CD4-positive, alpha-beta memory T cell (primary cell): ENCODE measurements at regions of chr1 and their contacts with region 1.

Region 1: DNA sequence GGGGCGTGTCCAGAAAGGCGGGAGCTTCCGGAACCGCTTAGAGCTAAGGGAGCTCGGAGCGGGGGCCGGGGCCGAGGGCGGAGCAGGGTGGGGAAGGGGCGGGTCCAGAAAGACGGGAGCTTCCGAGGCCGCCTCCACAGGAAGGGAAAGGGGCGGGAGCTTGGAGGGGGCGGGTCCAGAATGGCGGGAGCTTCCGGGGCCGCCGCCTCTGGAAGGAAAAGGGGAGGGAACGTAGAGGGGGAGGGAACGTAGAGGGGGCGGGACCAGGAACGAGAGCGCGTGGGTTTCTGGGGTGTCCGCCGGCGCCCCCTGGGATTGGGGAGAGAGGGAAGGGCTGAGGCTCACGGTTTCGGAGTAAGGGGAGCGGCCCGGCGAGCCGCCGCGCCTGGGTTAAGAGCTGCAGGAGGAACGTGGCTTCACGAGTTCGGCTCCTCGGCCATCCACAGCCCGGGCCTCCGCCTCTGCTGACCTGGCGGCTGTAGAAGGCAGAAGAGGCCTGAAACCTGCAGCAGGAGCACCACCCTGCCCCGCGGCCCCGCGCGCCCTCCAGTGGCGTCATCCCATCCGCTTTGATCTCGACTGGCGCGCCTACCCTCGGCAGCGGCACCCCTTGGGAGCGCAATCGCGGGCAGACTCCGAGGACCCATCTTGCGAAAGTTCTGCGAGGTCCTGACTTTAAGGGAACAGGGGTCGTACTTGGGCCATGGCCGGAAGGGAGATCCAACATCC is 22.9 kb upstream of the HPDL start:
- DNase-seq: peak; percentile 94 to 97 (median 95)
- H3K4me3 ChIP-seq: peak overlapping the region; percentile 42 to 86
- H3K4me3 Mint-ChIP-seq: peak overlapping the region; percentile 87 to 94 (median 92)
- H3K27ac ChIP-seq: peak overlapping the region; percentile 85
- H3K27ac Mint-ChIP-seq: peak overlapping the region; percentile 93 to 98 (median 96)
- H3K4me1 ChIP-seq: peaks cover 11% of the 10 kb centered on the region
- H3K4me1 Mint-ChIP-seq: peaks cover 11 to 24% (median 18%) of the 10 kb centered on the region in 4 donors
- H3K27me3 ChIP-seq: no peaks in the 10 kb centered on the region
- H3K27me3 Mint-ChIP-seq: no peaks in the 10 kb centered on the region

Region 2: DNA sequence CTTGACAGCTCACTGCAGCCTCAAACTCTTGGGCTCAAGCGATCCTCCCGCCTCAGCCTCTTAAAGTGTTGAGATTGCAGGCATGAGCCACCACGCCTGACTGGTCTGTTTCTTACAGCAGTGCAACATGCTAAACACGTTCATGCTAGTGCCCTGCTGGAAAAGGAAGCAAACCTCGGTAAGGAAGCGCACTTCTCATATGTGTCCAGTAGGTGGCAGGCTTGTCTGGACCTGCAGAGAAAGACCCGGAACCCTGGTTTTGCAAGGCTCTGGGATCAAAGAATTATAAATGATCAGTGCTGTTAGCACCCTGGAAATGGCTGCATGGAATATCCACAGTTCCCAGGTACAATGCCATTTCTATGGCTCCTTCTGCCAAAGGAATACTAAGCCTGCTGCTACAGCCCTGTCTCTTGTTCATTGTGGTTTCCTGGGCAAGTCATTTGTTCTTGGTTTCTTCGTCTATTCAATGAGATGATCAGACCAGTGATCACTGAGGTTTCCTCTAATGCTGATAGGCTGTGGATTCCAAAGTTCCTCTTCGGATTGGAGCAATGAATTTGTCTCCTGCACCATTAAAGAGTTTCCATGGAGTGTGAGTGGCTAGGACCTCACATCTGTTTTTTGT is 588.7 kb before region 1 on chr1:
- CTCF ChIA-PET with region 1: interaction called, 3 read pairs
- POLR2A ChIA-PET with region 1: interaction called, 3 read pairs
- intact Hi-C with region 1: loop called (anchors 5 kb)
- DNase-seq: peak; percentile 70 to 75 (median 74)
- H3K4me3 ChIP-seq: no peak overlapping the region
- H3K4me3 Mint-ChIP-seq: peak overlapping the region in 7 of 8 donors; percentile 1 to 84 (median 62)
- H3K27ac ChIP-seq: no peak overlapping the region
- H3K27ac Mint-ChIP-seq: peak overlapping the region; percentile 8 to 88 (median 77)
- H3K4me1 ChIP-seq: peaks cover 26% of the 10 kb centered on the region
- H3K4me1 Mint-ChIP-seq: peaks cover 28 to 47% (median 39%) of the 10 kb centered on the region in 4 donors
- H3K27me3 ChIP-seq: no peaks in the 10 kb centered on the region
- H3K27me3 Mint-ChIP-seq: no peaks in the 10 kb centered on the region

Region 3: GRCh38 chr1:44792783-44793714 is 510.7 kb before region 1 on chr1:
- CTCF ChIA-PET with region 1: interaction called, 13 read pairs
- POLR2A ChIA-PET with region 1: interaction called, 6 read pairs
- intact Hi-C with region 1: loop called (anchors 2 kb)
- DNase-seq: no peak
- H3K4me3 ChIP-seq: no peak overlapping the region
- H3K4me3 Mint-ChIP-seq: no peak overlapping the region
- H3K27ac ChIP-seq: no peak overlapping the region
- H3K27ac Mint-ChIP-seq: peak overlapping the region in 3 of 7 donors; percentile 44 to 91 (median 79)
- H3K4me1 ChIP-seq: no peaks in the 10 kb centered on the region
- H3K4me1 Mint-ChIP-seq: peaks cover 0 to 5% (median 2%) of the 10 kb centered on the region in 4 donors
- H3K27me3 ChIP-seq: no peaks in the 10 kb centered on the region
- H3K27me3 Mint-ChIP-seq: no peaks in the 10 kb centered on the region

Region 4: DNA sequence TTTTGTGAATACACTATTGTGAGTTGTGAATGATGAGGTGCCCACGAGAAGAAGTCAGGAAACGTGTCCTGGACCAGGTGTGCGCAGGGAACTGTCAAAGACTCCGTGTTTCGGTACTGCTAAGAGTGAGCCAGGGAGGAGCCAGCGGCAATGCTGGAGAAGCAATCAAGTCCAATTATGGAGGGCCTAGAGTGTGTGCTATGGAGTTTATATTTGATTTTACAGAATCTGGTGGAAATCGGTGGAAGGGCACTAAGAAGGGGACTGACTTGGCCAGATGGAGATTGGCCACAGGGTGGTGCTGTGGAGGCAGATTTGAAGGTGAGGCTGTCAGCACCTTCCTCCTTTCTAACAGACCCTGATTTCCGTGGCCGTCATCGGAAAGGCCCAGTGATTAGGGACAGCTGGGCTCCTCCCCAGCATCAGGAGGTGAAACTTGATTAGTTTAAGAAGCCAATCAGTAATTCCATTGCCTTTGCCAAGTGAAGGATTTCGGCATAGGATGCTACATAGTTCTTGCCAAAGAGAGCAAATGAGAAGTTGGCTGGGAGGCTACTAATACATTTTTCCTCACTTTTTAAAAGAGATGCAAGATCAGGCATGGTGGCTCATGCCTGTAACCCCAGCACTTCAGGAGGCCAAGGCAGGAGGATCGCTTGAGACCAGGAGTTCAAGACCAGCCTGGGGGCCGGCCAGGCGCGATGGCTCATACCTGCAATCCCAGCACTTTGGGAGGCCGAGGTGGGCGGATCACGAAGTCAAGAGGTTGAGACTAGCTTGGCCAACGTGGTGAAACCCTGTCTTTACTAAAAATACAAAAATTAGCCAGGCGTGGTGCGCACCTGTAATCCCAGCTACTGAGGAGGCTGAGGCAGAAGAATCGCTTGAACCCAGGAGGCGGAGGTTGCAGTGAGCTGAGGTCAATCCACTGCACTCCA is 467.7 kb before region 1 on chr1:
- CTCF ChIA-PET with region 1: interaction called, 5 read pairs
- POLR2A ChIA-PET with region 1: no interaction called
- intact Hi-C with region 1: loop called (anchors 1 kb)
- DNase-seq: peak; percentile 71 to 83 (median 75)
- H3K4me3 ChIP-seq: no peak overlapping the region
- H3K4me3 Mint-ChIP-seq: peak overlapping the region in 4 of 8 donors; percentile 19 to 69 (median 42)
- H3K27ac ChIP-seq: no peak overlapping the region
- H3K27ac Mint-ChIP-seq: peak overlapping the region in 6 of 7 donors; percentile 7 to 74 (median 58)
- H3K4me1 ChIP-seq: peaks cover 4% of the 10 kb centered on the region
- H3K4me1 Mint-ChIP-seq: peaks cover 5 to 9% (median 8%) of the 10 kb centered on the region in 4 donors
- H3K27me3 ChIP-seq: no peaks in the 10 kb centered on the region
- H3K27me3 Mint-ChIP-seq: peaks cover 5 to 10% of the 10 kb centered on the region in 2 donors

Region 5: DNA sequence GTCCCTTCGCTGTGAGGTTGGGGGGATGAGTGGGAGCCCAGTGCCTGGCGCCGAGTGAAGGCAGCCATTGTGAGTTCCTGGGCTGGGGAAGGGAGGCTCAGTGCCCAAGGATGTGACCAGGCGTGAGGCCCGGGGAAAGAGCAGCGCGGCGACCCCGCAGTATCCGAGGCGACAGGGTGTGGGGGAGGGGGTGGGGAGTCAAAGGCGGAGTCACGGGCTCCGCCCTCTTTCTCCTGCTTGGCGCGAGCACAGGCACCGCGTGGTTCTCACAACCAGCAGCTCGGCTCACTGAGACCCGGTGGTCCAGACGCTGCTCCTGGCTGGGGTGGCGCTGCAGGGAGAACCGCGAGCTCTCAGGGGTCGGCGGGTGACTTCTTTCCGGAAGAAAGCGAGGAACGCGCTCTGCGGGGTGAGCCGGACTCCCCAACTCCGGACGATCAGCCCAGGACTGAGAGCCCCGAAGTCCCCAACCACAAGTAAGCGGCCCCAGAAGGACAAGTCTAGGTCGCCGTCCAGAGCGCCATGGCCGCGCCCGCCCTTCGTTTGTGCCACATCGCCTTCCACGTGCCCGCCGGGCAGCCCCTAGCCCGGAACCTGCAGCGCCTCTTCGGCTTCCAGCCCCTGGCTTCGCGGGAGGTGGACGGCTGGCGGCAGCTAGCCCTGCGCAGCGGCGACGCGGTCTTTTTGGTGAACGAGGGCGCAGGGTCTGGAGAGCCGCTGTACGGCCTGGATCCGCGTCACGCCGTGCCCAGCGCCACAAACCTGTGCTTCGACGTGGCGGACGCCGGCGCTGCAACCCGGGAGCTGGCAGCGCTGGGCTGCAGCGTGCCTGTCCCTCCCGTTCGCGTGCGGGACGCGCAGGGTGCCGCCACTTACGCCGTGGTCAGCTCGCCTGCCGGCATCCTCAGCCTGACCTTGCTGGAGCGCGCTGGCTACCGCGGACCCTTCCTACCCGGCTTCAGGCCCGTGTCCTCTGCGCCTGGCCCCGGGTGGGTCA is 23.2 kb after region 1 on chr1 and contains the start of gene HPDL:
- CTCF ChIA-PET with region 1: interaction called, 4 read pairs
- POLR2A ChIA-PET with region 1: interaction called, 7 read pairs
- intact Hi-C with region 1: loop called (anchors 1 kb)
- DNase-seq: peak; percentile 25 to 53 (median 36)
- H3K4me3 ChIP-seq: peak within 1 kb of the TSS; percentile 42 to 54
- H3K4me3 Mint-ChIP-seq: peak within 1 kb of the TSS; percentile 74 to 89 (median 82)
- H3K27ac ChIP-seq: peak within 1 kb of the TSS; percentile 31
- H3K27ac Mint-ChIP-seq: peak within 1 kb of the TSS in 5 of 7 donors; percentile 21 to 71 (median 62)
- H3K4me1 ChIP-seq: peaks cover 13% of the 10 kb centered on the region
- H3K4me1 Mint-ChIP-seq: peaks cover 3 to 26% (median 4%) of the 10 kb centered on the region in 4 donors
- H3K27me3 ChIP-seq: no peaks in the 10 kb centered on the region
- H3K27me3 Mint-ChIP-seq: no peaks in the 10 kb centered on the region
- total RNA-seq, gene HPDL: 0.19 to 0.32 TPM

Region 6: DNA sequence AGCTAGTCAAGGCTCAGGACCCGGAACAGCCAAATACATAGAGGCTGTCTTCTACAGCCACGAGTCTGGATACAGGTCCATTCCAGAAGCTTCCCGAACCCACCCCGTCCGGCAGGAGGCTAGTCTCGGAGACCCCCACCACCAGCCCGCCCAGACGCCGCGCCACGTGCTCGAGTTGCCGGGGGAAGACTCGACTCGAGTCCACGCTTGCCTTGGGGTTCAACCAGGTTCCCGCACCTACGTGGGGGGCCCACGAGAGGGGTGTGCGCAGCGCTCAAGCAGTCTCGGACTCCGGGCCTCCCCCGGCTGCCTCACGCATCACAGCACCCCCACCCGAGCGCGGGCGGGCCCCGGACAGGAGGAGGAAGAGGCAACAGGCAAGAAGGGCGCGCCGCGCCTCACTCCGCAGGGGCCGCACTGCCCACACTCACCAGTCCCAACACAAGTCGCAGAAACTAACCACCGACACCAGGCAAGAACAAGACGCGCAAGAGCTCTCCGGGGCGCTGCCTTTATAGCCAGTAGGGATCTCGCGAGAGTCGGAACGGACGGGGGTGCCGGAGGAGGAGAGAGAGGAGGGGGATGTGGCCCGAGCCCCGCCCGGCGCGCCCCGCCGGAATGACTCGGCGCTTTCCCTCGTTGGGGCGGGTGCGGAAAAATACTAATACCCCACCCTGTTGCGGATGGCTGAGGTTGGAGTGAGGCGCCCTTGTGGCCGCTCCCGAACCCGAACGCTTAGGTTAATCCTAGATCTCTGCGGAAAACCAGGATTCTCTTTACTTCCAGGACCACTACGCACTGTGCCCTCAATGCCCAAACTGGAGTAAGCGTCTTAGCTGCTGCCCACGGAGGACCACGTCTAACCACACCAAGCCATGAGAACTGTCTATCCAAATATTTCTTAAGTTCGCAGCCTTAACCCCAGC is 217.9 kb after region 1 on chr1 and contains the start of gene PRDX1:
- CTCF ChIA-PET with region 1: no interaction called
- POLR2A ChIA-PET with region 1: interaction called, 11 read pairs
- intact Hi-C with region 1: no loop called
- DNase-seq: peak; percentile 95
- H3K4me3 ChIP-seq: peak within 1 kb of the TSS; percentile 90 to 94
- H3K4me3 Mint-ChIP-seq: peak within 1 kb of the TSS; percentile 93 to 97 (median 96)
- H3K27ac ChIP-seq: peak within 1 kb of the TSS; percentile 87
- H3K27ac Mint-ChIP-seq: peak within 1 kb of the TSS; percentile 85 to 97 (median 93)
- H3K4me1 ChIP-seq: peaks cover 25% of the 10 kb centered on the region
- H3K4me1 Mint-ChIP-seq: peaks cover 17 to 41% (median 29%) of the 10 kb centered on the region in 4 donors
- H3K27me3 ChIP-seq: no peaks in the 10 kb centered on the region
- H3K27me3 Mint-ChIP-seq: no peaks in the 10 kb centered on the region
- total RNA-seq, gene PRDX1: 130 to 145 TPM